ENCODE measurements at regions of chr4 and their contacts with region 1.

Region 1: GRCh38 chr4:26404743-26405206 is 84.0 kb downstream of the RBPJ start:
- DNase-seq: no peak

Region 2: GRCh38 chr4:25925486-25926201 is 479.1 kb before region 1 on chr4:
- intact Hi-C with region 1: loop called (anchors 10 kb)
- DNase-seq: peak in 9 of 10 donors; percentile 38 to 92 (median 52)

Region 3: DNA sequence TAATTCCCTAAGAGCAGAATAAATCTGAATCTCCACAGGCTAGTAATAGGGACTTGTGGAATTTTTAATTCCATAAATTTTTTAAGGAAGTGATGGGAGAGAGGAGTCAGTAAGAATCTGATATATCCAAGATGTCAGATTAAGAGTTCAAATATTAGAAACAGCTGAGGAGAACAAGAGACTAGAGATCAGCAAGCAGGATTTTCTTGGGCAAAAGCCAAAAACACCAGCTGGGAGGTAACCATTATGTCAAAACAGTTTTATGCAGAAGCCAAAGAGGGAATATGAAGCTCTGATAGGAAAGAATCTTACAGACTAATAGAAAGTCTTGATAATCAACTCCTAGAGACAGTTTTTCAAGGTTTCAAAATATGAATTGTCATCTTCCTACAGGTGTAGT is 156.1 kb before region 1 on chr4:
- intact Hi-C with region 1: loop called (anchors 10 kb)
- DNase-seq: no peak

Measured in posterior cingulate gyrus (tissue), 11 donors.